Prostate gland (tissue), 2 donors: ENCODE measurements at regions of chr15 and their contacts with region 1.

Region 1: DNA sequence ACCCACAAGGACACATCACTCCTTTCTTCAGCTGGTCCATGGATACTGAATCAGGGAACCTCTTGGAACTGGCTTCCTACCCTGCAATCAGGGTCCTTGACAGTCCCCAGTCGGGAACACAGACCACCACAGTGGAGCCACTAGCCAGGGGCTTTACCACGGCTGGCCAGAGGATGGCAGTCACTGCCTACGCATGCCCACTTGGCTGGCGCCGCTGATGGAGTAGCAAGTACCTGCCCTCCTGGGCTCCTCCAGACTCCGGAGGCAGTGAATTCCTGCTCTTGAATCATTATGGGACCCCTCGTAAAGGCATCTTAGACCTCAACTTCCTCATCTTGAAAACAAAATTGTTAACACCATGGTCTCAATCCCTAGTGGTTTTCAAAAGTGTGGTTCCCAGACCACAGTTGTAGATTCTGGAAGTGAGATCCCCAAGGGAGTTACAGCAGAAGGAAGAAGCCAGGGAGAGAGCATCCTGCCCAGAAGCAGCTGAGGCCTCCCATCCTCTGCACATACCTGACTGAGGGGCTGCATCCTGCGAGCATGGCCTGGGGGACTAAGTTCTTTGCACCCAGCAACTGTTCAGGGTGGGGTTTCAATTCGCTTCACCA is 9.1 kb upstream of the SKIC8 start:
- DNase-seq: peak; percentile 71
- H3K4me3 ChIP-seq: no peak overlapping the region
- H3K27ac ChIP-seq: no peak overlapping the region
- H3K4me1 ChIP-seq: no peaks in the 10 kb centered on the region
- H3K27me3 ChIP-seq: no peaks in the 10 kb centered on the region
- CTCF ChIP-seq: peak; percentile 44 to 87 (median 76)
- POLR2A ChIP-seq: no peak

Region 2: DNA sequence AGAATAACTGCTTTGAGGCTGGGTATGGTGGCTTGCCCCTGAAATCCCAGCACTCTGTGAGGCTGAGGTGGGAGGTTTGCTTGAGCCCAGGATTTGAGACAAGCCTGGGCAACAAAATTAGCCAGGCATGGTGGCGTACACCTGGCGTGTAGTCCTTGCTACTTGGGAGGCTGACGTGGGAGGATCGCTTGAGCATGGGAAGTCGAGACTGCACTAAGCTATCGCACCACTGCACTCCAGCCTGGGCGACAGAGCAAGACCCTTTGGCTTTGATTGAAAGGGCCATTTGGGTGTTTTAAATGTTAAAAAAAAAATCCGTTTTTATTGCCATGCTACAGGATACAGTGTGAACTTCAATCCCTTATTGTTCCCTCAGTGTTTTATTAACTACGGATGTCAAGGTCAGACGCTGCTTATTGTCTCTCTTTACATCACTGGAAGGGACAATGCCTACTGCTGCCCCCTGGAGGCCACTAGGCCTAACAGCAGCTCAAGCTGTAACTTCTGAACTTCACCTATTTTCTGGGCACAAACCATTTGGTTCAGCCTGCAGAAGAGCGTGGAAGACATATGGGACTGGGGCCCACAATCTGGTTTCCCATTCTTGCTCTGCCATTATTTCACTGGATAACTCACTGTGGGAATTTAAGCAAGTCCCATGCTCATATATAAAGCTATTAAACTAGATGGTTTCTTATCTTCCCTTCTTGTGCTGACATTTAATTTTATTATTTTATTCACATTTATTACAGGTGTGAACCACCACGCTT is 114.2 kb after region 1 on chr15:
- intact Hi-C with region 1: loop called (anchors 5 kb)
- DNase-seq: peak; percentile 48
- H3K4me3 ChIP-seq: no peak overlapping the region
- H3K27ac ChIP-seq: no peak overlapping the region
- H3K4me1 ChIP-seq: no peaks in the 10 kb centered on the region
- H3K27me3 ChIP-seq: no peaks in the 10 kb centered on the region
- CTCF ChIP-seq: peak; percentile 46 to 84 (median 72)
- POLR2A ChIP-seq: no peak

Region 3: DNA sequence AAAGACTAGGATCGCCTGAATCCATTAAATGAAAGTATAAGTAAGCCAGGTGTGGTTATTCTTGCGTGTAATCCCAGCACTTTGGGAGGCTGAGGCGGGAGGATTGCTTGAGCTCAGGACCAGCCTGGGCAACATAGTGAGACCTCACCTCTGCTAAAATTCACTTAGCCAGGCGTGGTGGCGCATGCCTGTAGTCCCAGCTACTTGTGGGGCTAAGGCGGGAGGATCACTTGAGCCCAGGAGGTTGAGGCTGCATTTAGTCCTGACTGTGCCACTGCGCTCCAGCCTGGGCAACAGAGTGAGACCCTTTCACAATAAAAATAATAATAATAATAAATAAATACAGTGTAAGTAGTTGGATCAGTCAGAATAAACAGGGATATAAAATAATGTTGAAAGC is 173.4 kb after region 1 on chr15:
- intact Hi-C with region 1: loop called (anchors 10 kb)
- DNase-seq: no peak
- H3K4me3 ChIP-seq: no peak overlapping the region
- H3K27ac ChIP-seq: no peak overlapping the region
- H3K4me1 ChIP-seq: no peaks in the 10 kb centered on the region
- H3K27me3 ChIP-seq: no peaks in the 10 kb centered on the region
- CTCF ChIP-seq: no peak
- POLR2A ChIP-seq: no peak

Region 4: GRCh38 chr15:78714890-78715289 is 406.4 kb after region 1 on chr15:
- intact Hi-C with region 1: no loop called
- DNase-seq: no peak
- H3K4me3 ChIP-seq: no peak overlapping the region
- H3K27ac ChIP-seq: no peak overlapping the region
- H3K4me1 ChIP-seq: no peaks in the 10 kb centered on the region
- H3K27me3 ChIP-seq: no peaks in the 10 kb centered on the region
- CTCF ChIP-seq: no peak
- POLR2A ChIP-seq: no peak